Sciatic nerve (tissue), 2 donors: ENCODE measurements at regions of chr20 and their contacts with region 1.

Region 1: GRCh38 chr20:62182613-62183425 is at the start of gene MTG2:
- DNase-seq: peak; percentile 96
- ATAC-seq: peak; percentile 98
- total RNA-seq, gene MTG2: 31.4 TPM

Region 2: GRCh38 chr20:61841966-61842365 is 340.9 kb before region 1 on chr20:
- intact Hi-C with region 1: no loop called
- DNase-seq: no peak
- ATAC-seq: no peak

Region 3: GRCh38 chr20:62043131-62043914 is 139.5 kb before region 1 on chr20:
- intact Hi-C with region 1: no loop called
- DNase-seq: no peak
- ATAC-seq: peak; percentile 75

Region 4: DNA sequence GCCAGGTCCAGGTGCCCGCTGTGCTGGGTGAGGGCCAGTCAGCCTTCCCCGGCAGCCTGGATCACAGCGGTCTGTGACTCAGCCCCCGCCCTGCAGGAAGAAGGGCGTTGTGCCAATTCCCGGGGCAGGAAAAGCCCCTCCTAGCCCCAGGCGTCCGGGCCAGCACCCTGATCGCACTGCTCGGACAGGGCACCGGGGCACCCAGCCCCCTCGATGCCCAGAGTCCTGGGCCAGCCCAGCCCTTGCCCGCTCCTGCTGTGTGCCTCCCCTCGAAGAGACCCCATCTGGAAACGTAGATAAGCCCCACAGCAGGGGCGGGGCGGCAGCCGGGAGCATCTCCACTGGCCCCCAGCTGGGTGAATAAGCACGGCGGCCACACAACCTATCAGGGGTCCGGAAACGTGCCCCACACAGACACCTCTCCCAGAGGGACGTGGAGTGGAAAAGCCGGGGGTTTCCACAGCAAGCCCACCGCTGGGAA is 174.4 kb after region 1 on chr20:
- intact Hi-C with region 1: loop called (anchors 5 kb)
- DNase-seq: no peak
- ATAC-seq: peak; percentile 9